Gastrocnemius medialis (tissue), 4 donors: ENCODE measurements at regions of chr17 and their contacts with region 1.

Region 1: GRCh38 chr17:51876986-51877385 is 281.5 kb downstream of the CA10 start:
- DNase-seq: no peak
- ATAC-seq: no peak
- H3K4me3 ChIP-seq: no peak overlapping the region
- H3K27ac ChIP-seq: no peak overlapping the region
- H3K4me1 ChIP-seq: no peaks in the 10 kb centered on the region
- H3K27me3 ChIP-seq: no peaks in the 10 kb centered on the region
- CTCF ChIP-seq: no peak
- POLR2A ChIP-seq: no peak

Region 2: DNA sequence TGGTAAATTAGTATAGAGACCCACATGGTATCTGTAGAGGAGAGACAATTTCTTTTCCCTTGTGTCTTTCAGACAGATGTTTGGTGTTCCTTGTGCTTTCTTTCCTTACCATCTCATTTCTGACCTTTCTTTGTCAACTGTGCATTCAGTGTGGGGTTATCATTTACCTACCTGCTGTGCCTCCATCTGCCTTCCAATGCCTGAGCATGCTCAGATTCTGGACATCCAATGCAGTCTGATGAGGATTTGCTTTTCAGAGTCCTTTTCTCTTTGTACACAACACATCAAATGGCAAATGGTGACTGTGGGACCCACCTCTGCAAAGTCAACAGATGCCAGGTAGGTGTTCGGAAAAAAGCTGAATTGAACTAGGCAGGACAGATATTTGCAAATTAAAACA is 83.3 kb before region 1 on chr17:
- in situ Hi-C with region 1: no loop called
- intact Hi-C with region 1: no loop called
- DNase-seq: no peak
- ATAC-seq: no peak
- H3K4me3 ChIP-seq: no peak overlapping the region
- H3K27ac ChIP-seq: no peak overlapping the region
- H3K4me1 ChIP-seq: no peaks in the 10 kb centered on the region
- H3K27me3 ChIP-seq: no peaks in the 10 kb centered on the region
- CTCF ChIP-seq: no peak
- POLR2A ChIP-seq: no peak

Region 3: GRCh38 chr17:52064791-52065211 is 187.8 kb after region 1 on chr17:
- in situ Hi-C with region 1: no loop called
- intact Hi-C with region 1: loop called (anchors 5 kb)
- DNase-seq: no peak
- ATAC-seq: no peak
- H3K4me3 ChIP-seq: no peak overlapping the region
- H3K27ac ChIP-seq: no peak overlapping the region
- H3K4me1 ChIP-seq: no peaks in the 10 kb centered on the region
- H3K27me3 ChIP-seq: no peaks in the 10 kb centered on the region
- CTCF ChIP-seq: no peak
- POLR2A ChIP-seq: no peak